CD8-positive, alpha-beta memory T cell (primary cell): ENCODE measurements at regions of chr11 and their contacts with region 1.

Region 1: DNA sequence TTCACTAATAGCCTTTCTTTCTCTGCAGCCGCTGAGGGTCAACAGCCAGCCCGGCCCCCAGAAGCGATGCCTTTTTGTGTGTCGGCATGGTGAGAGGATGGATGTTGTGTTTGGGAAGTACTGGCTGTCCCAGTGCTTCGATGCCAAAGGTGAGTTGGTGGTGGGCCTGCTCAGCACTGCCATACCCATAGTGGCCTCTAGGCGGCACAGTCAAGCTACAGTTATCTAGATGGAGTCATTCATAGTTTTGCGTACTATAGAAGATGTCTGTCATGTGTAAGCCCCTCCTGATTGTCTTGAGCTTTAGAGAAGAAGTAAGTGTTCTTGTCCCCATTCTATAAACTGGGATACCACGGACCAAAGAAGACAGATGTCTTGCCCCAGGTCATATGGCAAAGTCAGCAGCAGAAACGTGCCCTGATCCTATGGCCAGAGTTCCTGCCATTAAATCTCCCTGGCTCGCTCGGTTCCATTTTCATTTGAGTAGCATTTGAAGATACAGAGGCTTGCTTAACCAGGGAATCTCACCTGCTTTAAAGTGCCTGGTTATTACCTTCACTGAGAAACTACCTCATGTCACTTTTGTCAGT is 42.1 kb upstream of the CRTAM start:
- DNase-seq: peak; percentile 56 to 81 (median 61)
- H3K4me3 ChIP-seq: no peak overlapping the region
- H3K4me3 Mint-ChIP-seq: peak overlapping the region in 1 of 7 donors; percentile 6
- H3K27ac ChIP-seq: no peak overlapping the region
- H3K27ac Mint-ChIP-seq: peak overlapping the region in 2 of 8 donors; percentile 32 to 65
- H3K4me1 ChIP-seq: no peaks in the 10 kb centered on the region
- H3K4me1 Mint-ChIP-seq: peaks cover 0 to 6% (median 5%) of the 10 kb centered on the region in 3 donors
- H3K27me3 ChIP-seq: no peaks in the 10 kb centered on the region
- H3K27me3 Mint-ChIP-seq: no peaks in the 10 kb centered on the region

Region 2: DNA sequence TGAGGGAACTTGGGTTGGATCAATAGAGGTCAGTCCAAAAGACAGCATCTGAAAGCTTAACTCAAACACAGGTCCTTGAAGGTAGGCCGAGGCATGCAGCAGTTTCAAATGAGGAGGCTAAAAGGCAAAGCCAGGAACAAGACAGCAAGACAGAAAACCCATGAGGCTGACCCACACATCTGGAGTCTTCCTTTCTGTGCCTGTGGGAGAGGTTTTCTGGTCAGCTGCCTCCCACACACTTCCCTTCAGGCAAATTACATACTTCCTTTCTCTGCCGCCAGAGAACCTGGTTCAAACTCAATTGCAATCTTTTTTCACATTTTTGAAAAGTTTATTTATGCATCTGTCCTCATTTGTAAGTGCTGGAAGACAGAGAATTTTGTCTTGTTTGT is 12.3 kb after region 1 on chr11:
- CTCF ChIA-PET with region 1: interaction called, 22 read pairs
- POLR2A ChIA-PET with region 1: no interaction called
- DNase-seq: no peak
- H3K4me3 ChIP-seq: no peak overlapping the region
- H3K4me3 Mint-ChIP-seq: peak overlapping the region in 3 of 7 donors; percentile 16 to 38 (median 37)
- H3K27ac ChIP-seq: no peak overlapping the region
- H3K27ac Mint-ChIP-seq: peak overlapping the region in 7 of 8 donors; percentile 5 to 82 (median 70)
- H3K4me1 ChIP-seq: peaks cover 19% of the 10 kb centered on the region
- H3K4me1 Mint-ChIP-seq: peaks cover 28 to 43% (median 40%) of the 10 kb centered on the region in 3 donors
- H3K27me3 ChIP-seq: no peaks in the 10 kb centered on the region
- H3K27me3 Mint-ChIP-seq: no peaks in the 10 kb centered on the region

Region 3: GRCh38 chr11:122832721-122833470 is 36.7 kb after region 1 on chr11:
- CTCF ChIA-PET with region 1: interaction called, 18 read pairs
- POLR2A ChIA-PET with region 1: interaction called, 3 read pairs
- DNase-seq: no peak
- H3K4me3 ChIP-seq: no peak overlapping the region
- H3K4me3 Mint-ChIP-seq: peak overlapping the region in 4 of 7 donors; percentile 6 to 37 (median 22)
- H3K27ac ChIP-seq: no peak overlapping the region
- H3K27ac Mint-ChIP-seq: peak overlapping the region; percentile 25 to 85 (median 65)
- H3K4me1 ChIP-seq: peaks cover 8% of the 10 kb centered on the region
- H3K4me1 Mint-ChIP-seq: peaks cover 45 to 53% (median 47%) of the 10 kb centered on the region in 3 donors
- H3K27me3 ChIP-seq: no peaks in the 10 kb centered on the region
- H3K27me3 Mint-ChIP-seq: no peaks in the 10 kb centered on the region

Region 4: DNA sequence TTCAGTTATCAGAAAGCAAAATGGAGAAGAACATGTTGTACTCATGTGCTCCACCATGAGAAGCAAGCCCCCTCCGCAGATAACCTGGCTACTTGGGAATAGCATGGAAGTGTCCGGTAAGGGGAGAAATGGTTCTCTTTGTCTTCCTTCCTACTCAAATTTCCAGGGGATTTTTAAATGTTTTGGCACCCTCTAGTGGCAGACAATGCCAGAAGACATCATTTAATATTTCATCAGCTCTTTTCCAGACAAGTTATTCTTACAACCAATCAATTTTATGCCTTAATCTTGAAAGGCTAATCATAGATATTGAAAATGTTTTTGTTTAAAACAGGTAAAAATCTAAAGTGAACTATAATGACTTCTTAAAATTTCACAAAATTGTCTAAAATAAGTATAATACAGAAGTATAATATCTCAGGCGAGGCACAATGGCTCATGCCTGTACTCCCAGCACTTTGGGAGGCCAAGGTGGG is 57.8 kb after region 1 on chr11:
- CTCF ChIA-PET with region 1: interaction called, 135 read pairs
- POLR2A ChIA-PET with region 1: interaction called, 5 read pairs
- DNase-seq: peak in 4 of 5 donors; percentile 30 to 72 (median 61)
- H3K4me3 ChIP-seq: no peak overlapping the region
- H3K4me3 Mint-ChIP-seq: no peak overlapping the region
- H3K27ac ChIP-seq: no peak overlapping the region
- H3K27ac Mint-ChIP-seq: peak overlapping the region in 6 of 8 donors; percentile 32 to 75 (median 52)
- H3K4me1 ChIP-seq: peaks cover 51% of the 10 kb centered on the region
- H3K4me1 Mint-ChIP-seq: peaks cover 51 to 64% (median 62%) of the 10 kb centered on the region in 3 donors
- H3K27me3 ChIP-seq: no peaks in the 10 kb centered on the region
- H3K27me3 Mint-ChIP-seq: no peaks in the 10 kb centered on the region

Region 5: GRCh38 chr11:122893131-122893530 is 96.9 kb after region 1 on chr11:
- CTCF ChIA-PET with region 1: no interaction called
- POLR2A ChIA-PET with region 1: no interaction called
- DNase-seq: no peak
- H3K4me3 ChIP-seq: no peak overlapping the region
- H3K4me3 Mint-ChIP-seq: no peak overlapping the region
- H3K27ac ChIP-seq: no peak overlapping the region
- H3K27ac Mint-ChIP-seq: no peak overlapping the region
- H3K4me1 ChIP-seq: no peaks in the 10 kb centered on the region
- H3K4me1 Mint-ChIP-seq: peaks cover 1 to 15% (median 6%) of the 10 kb centered on the region in 3 donors
- H3K27me3 ChIP-seq: no peaks in the 10 kb centered on the region
- H3K27me3 Mint-ChIP-seq: no peaks in the 10 kb centered on the region

Region 6: DNA sequence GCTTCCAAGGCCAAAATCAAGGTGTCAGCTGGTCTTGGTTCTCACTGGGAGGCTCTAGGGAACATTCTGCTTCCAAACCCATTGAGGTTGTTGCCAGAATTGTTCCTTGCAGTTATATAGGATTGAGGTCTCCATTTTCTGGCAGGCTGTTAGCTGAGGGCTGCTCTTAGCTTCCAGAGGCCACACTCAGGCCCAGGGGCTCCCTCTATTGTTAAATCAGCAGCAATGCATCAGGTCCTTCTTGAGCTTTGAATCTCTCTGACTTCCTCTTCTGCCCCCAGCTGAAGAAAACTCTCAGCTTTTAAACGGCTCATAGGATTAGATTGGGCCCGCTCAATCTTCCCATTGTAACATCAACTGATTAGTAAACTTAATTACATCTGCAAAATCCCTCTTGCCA is 224.7 kb after region 1 on chr11:
- CTCF ChIA-PET with region 1: interaction called, 42 read pairs
- POLR2A ChIA-PET with region 1: interaction called, 3 read pairs
- DNase-seq: peak in 2 of 5 donors; percentile 7 to 18
- H3K4me3 ChIP-seq: no peak overlapping the region
- H3K4me3 Mint-ChIP-seq: no peak overlapping the region
- H3K27ac ChIP-seq: no peak overlapping the region
- H3K27ac Mint-ChIP-seq: peak overlapping the region in 1 of 8 donors; percentile 40
- H3K4me1 ChIP-seq: no peaks in the 10 kb centered on the region
- H3K4me1 Mint-ChIP-seq: peaks cover 5 to 10% (median 8%) of the 10 kb centered on the region in 3 donors
- H3K27me3 ChIP-seq: no peaks in the 10 kb centered on the region
- H3K27me3 Mint-ChIP-seq: peaks cover 5 to 12% of the 10 kb centered on the region in 2 donors